ENCODE measurements at regions of chr13 and their contacts with region 1.

Region 1: GRCh38 chr13:36297366-36298338 is at the start of gene CCDC169:
- DNase-seq: peak; percentile 68 to 82 (median 77)
- H3K4me3 ChIP-seq: peak within 1 kb of the TSS; percentile 5 to 73 (median 53)
- H3K27ac ChIP-seq: peak within 1 kb of the TSS in 3 of 5 donors; percentile 19 to 72 (median 44)
- H3K4me1 ChIP-seq: peaks cover 4 to 12% of the 10 kb centered on the region in 2 donors
- H3K27me3 ChIP-seq: no peaks in the 10 kb centered on the region
- CTCF ChIP-seq: no peak
- POLR2A ChIP-seq: peak; percentile 9 to 62
- total RNA-seq, gene CCDC169: 0.18 to 3.7 (median 1.7) TPM

Region 2: DNA sequence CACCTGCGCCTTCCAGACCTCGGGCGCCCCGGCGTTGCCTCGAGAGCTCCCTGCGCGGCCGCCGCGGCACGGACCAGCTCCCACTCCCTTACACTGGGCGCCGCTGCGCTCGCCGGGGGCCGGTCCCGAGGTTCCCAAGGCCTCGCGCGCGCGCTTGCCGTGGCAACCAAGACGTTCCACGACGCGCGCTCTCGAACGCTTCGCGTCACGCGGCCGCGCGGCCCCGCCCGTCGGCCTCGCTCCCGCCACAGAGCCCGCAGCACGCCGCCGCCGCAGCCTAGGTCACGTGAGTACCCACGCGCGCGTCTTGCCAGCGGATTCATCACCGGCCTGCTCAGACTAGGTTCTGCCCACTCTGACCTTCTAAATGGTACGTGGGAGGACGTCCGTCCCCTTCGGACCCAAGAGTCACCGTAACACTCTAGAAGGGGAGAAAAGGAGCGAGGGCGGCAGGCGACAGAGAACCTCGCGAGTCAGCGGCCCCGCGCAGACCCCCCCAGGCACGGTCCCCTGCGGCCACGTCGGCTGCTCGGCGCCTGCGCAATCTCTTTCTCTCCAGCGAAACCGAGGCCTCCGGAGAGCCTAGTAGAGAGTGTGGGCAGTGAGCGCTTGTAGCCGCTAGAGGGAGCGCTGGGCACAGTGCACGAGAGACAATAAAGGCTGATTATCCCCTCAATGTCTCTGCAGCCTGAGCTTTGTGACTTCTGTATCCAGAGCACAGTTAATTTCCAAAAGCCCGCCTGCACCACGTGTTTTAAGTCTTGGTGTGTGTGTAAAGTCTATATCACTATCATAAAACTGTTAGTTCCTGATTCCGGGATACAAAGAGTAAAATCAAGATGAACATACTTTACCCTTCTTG is 48.8 kb after region 1 on chr13 and contains the start of gene SPART:
- intact Hi-C with region 1: loop called in 1 of 2 experiments (anchors 10 kb)
- DNase-seq: peak; percentile 93 to 98 (median 94)
- H3K4me3 ChIP-seq: peak within 1 kb of the TSS; percentile 68 to 96 (median 88)
- H3K27ac ChIP-seq: peak within 1 kb of the TSS; percentile 97 to 100 (median 99)
- H3K4me1 ChIP-seq: peaks cover 10 to 45% of the 10 kb centered on the region in 2 donors
- H3K27me3 ChIP-seq: no peaks in the 10 kb centered on the region
- CTCF ChIP-seq: peak; percentile 95 to 98 (median 98)
- POLR2A ChIP-seq: peak; percentile 54 to 87
- total RNA-seq, gene SPART: 56.0 to 208 (median 92.1) TPM